IMR-90 (cell line): ENCODE measurements at regions of chr18 and their contacts with region 1.

Region 1: GRCh38 chr18:36149514-36150289 is 20.0 kb downstream of the ELP2 start:
- DNase-seq: no peak
- ATAC-seq: no peak
- H3K4me3 ChIP-seq: no peak overlapping the region
- H3K27ac ChIP-seq: no peak overlapping the region
- H3K4me1 ChIP-seq: peaks cover 11% of the 10 kb centered on the region
- H3K27me3 ChIP-seq: no peaks in the 10 kb centered on the region
- CTCF ChIP-seq: no peak
- POLR2A ChIP-seq: no peak
- RAD21 ChIP-seq: no peak

Region 2: GRCh38 chr18:36139250-36139649 is 10.5 kb before region 1 on chr18:
- CTCF ChIA-PET with region 1: no interaction called
- POLR2A ChIA-PET with region 1: no interaction called
- dilution Hi-C with region 1: no loop called
- in situ Hi-C with region 1: no loop called
- intact Hi-C with region 1: loop called (anchors 2 kb)
- DNase-seq: no peak
- ATAC-seq: no peak
- H3K4me3 ChIP-seq: no peak overlapping the region
- H3K27ac ChIP-seq: no peak overlapping the region
- H3K4me1 ChIP-seq: no peaks in the 10 kb centered on the region
- H3K27me3 ChIP-seq: no peaks in the 10 kb centered on the region
- CTCF ChIP-seq: no peak
- POLR2A ChIP-seq: no peak
- RAD21 ChIP-seq: no peak

Region 3: GRCh38 chr18:36169938-36170337 is 20.2 kb after region 1 on chr18:
- CTCF ChIA-PET with region 1: no interaction called
- POLR2A ChIA-PET with region 1: no interaction called
- dilution Hi-C with region 1: no loop called
- in situ Hi-C with region 1: no loop called
- intact Hi-C with region 1: loop called (anchors 1 kb)
- DNase-seq: no peak
- ATAC-seq: no peak
- H3K4me3 ChIP-seq: no peak overlapping the region
- H3K27ac ChIP-seq: no peak overlapping the region
- H3K4me1 ChIP-seq: 0 out of 2 replicates have a peak, but pooled peaks cover 2% of the 10 kb centered on the region
- H3K27me3 ChIP-seq: no peaks in the 10 kb centered on the region
- CTCF ChIP-seq: no peak
- POLR2A ChIP-seq: no peak
- RAD21 ChIP-seq: no peak